Activated CD4-positive, alpha-beta T cell treated with anti-CD3 and anti-CD28 coated beads, Interleukin-2, amount 10 ng/mL, durations not matched to agents 7 days and 5 days (primary cell): ENCODE measurements at regions of chr6 and their contacts with region 1.

Region 1: DNA sequence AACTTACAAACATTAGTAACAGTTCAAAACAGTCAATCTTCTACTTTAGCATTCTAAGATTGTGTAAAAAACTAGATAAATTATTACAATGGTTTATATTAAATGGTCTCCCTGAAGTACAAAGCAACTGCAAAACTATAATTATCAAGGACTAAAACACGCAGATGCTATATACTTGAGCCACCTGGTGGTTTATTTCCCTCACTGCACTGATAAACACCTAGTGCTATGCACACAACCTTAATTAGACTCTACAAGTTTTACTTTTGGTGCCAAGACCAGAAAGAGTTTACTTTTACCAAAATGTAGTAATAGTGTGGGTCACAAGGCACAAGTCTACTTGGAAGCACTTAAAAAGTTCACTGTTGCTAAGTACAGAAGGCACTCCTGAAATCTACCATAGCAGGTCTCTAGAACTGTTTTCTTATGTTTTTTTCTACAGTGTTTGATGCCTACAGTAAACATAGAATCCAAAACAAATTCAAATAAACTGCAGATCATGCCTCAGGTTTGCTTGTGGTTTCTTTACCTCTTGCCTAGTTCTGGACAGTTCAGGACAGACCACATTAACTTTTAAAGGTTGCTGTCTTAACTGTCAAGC is 49.2 kb downstream of the GMDS start:
- DNase-seq: peak; percentile 57
- H3K4me3 Mint-ChIP-seq: no peak overlapping the region
- H3K27ac Mint-ChIP-seq: no peak overlapping the region
- H3K4me1 Mint-ChIP-seq: no peaks in the 10 kb centered on the region
- H3K27me3 Mint-ChIP-seq: no peaks in the 10 kb centered on the region

Region 2: DNA sequence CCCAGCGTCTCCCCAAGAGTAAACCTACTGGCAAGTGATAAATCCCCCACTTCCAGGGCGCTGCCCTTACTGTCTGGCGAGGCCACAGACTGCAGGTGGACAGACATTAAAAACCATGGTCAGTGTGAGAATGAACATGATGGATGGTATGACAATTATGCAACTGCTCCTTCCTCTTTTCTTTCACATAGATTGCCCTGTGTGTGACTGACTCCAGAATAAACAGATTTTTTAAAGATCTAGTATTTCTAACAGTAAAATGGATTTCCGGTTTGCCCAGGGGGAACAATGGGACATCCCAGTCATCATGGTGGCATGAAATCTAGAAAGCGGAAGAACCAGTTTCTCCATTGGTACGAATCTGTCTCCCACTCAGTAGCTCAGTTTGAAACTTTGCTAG is 432.8 kb before region 1 on chr6:
- CTCF ChIA-PET with region 1: no interaction called
- POLR2A ChIA-PET with region 1: interaction called, 16 read pairs
- DNase-seq: no peak
- H3K4me3 Mint-ChIP-seq: no peak overlapping the region
- H3K27ac Mint-ChIP-seq: no peak overlapping the region
- H3K4me1 Mint-ChIP-seq: peaks cover 9% of the 10 kb centered on the region
- H3K27me3 Mint-ChIP-seq: no peaks in the 10 kb centered on the region

Region 3: DNA sequence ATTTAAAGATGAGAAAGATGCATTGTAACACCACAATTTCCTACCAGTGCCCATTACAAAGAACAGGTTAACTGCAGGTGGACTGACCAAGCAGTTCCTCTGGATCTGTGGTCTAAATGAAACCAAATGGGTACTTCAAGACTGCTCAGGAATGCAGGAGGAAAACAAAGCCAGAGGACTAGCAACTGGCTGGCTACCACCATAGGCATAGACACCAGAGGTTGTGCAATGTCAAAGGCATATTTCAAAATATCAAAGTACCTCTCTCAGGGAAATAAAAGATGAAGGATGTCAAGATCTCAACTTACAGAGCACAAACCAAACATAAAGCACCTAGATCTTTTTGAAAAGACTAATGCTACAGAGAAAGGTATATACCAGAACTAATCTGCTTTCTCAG is 16.2 kb before region 1 on chr6:
- CTCF ChIA-PET with region 1: no interaction called
- POLR2A ChIA-PET with region 1: no interaction called
- DNase-seq: no peak
- H3K4me3 Mint-ChIP-seq: no peak overlapping the region
- H3K27ac Mint-ChIP-seq: no peak overlapping the region
- H3K4me1 Mint-ChIP-seq: peaks cover 3% of the 10 kb centered on the region
- H3K27me3 Mint-ChIP-seq: peaks cover 3% of the 10 kb centered on the region

Region 4: DNA sequence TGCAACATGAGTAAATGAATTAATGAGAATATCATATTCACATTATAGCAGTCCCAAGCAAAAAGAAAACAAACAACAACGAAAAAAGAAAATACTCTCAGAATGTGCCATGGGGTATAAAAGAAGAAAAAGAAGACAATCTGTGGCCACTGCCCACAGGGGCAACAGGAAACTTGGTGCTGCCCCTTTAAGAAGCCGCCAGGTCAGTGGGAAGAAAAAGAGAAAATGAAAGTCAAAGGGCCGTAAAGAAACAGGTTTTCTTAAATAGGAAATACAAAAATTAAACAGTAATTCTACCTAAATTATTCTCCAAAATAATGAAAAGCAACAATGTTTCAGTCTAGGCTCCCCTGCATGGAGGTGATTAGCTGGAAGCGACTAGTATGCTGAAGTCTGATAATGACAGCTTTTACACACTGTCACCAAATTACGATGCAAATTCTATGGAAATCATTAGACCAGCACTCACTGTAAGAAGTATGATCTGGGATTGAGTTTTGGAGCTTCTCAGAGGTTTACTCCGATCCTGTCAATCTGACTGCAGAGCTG is 25.6 kb after region 1 on chr6:
- CTCF ChIA-PET with region 1: no interaction called
- POLR2A ChIA-PET with region 1: no interaction called
- DNase-seq: no peak
- H3K4me3 Mint-ChIP-seq: peak overlapping the region; percentile 81
- H3K27ac Mint-ChIP-seq: peak overlapping the region; percentile 91
- H3K4me1 Mint-ChIP-seq: peaks cover 22% of the 10 kb centered on the region
- H3K27me3 Mint-ChIP-seq: no peaks in the 10 kb centered on the region